HepG2 (cell line): ENCODE measurements at regions of chr13 and their contacts with region 1.

Region 1: GRCh38 chr13:41652727-41653361 is 195.5 kb downstream of the RGCC start:
- DNase-seq: peak; percentile 62
- ATAC-seq: no peak
- H3K4me3 ChIP-seq: no peak overlapping the region
- H3K27ac ChIP-seq: no peak overlapping the region
- H3K4me1 ChIP-seq: peaks cover 46% of the 10 kb centered on the region
- H3K27me3 ChIP-seq: no peaks in the 10 kb centered on the region
- CTCF ChIP-seq: peak; percentile 69
- EP300 ChIP-seq: no peak
- POLR2A ChIP-seq: no peak
- RAD21 ChIP-seq: peak; percentile 73

Region 2: GRCh38 chr13:41075034-41075433 is 577.8 kb before region 1 on chr13:
- CTCF ChIA-PET with region 1: no interaction called
- POLR2A ChIA-PET with region 1: no interaction called
- in situ Hi-C with region 1: no loop called
- intact Hi-C with region 1: loop called (anchors 2 kb)
- DNase-seq: no peak
- ATAC-seq: no peak
- H3K4me3 ChIP-seq: no peak overlapping the region
- H3K27ac ChIP-seq: no peak overlapping the region
- H3K4me1 ChIP-seq: no peaks in the 10 kb centered on the region
- H3K27me3 ChIP-seq: no peaks in the 10 kb centered on the region
- CTCF ChIP-seq: peak; percentile 53
- EP300 ChIP-seq: no peak
- POLR2A ChIP-seq: no peak
- RAD21 ChIP-seq: 0 out of 2 replicates have a peak, but pooled peaks have one; percentile 36

Region 3: DNA sequence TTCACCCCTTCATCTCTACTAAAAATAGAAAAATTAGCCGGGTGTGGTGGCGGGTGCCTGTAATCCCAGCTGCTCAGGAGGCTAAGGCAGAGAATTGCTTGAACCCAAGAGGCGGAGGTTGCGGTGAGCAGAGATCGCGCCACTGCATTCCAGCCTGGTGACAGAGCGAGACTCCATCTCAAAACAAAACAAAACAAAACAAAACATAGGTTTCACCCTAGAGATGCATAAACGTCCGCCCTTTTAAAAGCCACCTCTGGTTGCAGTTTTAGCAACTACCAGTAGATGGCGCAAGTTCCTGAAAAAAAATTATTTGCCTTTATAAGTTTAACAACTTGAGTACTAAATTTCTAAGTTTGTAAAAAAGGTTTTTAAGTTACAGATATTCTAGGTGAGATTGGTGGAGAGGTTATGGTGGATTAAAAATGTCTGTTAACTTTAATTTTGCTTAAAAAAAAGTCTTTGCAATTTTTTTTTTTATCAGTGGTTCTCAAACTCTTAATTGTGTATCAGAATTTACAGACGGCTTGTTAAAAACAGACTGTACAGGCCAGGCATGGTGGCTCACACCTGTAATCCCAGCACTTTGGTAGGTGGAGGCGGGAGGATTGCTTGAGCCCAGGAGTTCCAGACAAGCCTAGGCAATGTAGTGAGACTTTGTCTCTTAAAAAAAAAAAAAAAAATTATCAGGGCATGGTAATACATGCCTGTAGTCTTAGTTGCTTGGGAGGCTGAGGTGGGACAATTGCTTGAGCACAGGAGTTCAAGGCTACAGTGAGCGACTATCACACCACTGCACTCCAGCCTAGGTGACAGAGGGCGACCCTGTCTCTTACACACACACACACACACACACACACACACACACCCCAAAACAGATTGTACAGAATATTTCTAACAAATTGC is 299.7 kb before region 1 on chr13:
- CTCF ChIA-PET with region 1: interaction called, 10 read pairs
- POLR2A ChIA-PET with region 1: no interaction called
- in situ Hi-C with region 1: no loop called
- intact Hi-C with region 1: loop called (anchors 1 kb)
- DNase-seq: peak; percentile 35
- ATAC-seq: peak; percentile 65
- H3K4me3 ChIP-seq: no peak overlapping the region
- H3K27ac ChIP-seq: no peak overlapping the region
- H3K4me1 ChIP-seq: peaks cover 20% of the 10 kb centered on the region
- H3K27me3 ChIP-seq: no peaks in the 10 kb centered on the region
- CTCF ChIP-seq: peak; percentile 56
- EP300 ChIP-seq: no peak
- POLR2A ChIP-seq: no peak
- RAD21 ChIP-seq: no peak

Region 4: DNA sequence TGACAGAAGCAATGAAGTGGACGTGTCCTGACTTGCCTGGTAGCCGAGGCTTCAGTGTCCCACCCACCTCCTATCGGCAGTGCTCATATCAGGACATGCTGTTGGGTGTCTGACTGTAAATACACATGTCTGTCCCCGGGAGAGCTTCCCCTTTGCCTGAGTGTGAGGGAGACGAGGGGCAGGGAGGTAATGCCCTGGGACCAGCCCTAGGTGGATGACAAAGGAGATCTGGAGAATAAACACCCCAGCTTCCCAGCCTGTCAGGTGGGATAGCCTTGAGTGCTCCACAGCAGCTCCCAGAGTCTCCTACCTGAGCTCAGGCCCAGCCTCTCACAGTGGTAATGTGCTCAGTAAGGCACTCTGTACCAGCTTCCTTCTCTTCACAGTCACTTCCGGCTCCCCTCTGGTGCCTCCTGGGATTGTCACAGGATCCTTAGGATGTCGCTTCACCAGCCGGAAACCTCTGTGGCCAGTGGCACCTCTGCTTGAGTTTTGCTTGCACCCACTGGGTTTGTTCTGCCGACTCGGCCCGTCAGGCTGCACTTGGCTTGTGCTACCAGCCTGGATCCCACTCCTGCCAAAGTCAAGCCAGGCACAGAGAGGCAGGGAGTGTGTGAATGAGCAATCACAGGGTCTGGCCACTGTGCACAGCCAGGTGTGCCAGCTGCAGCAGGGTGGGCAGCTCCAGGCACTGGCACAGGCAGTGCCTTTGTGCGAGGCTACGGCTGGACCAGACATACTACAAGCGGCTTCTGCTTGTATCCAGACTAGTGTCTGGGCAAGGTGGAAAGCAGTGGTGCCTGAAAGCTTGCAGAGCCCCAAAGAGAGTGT is 249.9 kb before region 1 on chr13:
- CTCF ChIA-PET with region 1: no interaction called
- POLR2A ChIA-PET with region 1: interaction called, 14 read pairs
- in situ Hi-C with region 1: no loop called
- intact Hi-C with region 1: no loop called
- DNase-seq: peak; percentile 29
- ATAC-seq: peak; percentile 96
- H3K4me3 ChIP-seq: peak overlapping the region; percentile 11 to 58 (median 49); a peak in 5 of 6 replicates
- H3K27ac ChIP-seq: no peak overlapping the region
- H3K4me1 ChIP-seq: peaks cover 19% of the 10 kb centered on the region; the same call in 1 of the 2 replicates
- H3K27me3 ChIP-seq: no peaks in the 10 kb centered on the region
- CTCF ChIP-seq: no peak
- EP300 ChIP-seq: no peak
- POLR2A ChIP-seq: no peak
- RAD21 ChIP-seq: no peak

Region 5: GRCh38 chr13:41456768-41457588 is 195.9 kb before region 1 on chr13 and contains the start of gene RGCC:
- CTCF ChIA-PET with region 1: interaction called, 3 read pairs
- POLR2A ChIA-PET with region 1: no interaction called
- in situ Hi-C with region 1: no loop called
- intact Hi-C with region 1: loop called (anchors 2 kb)
- DNase-seq: peak; percentile 30
- ATAC-seq: peak; percentile 92
- H3K4me3 ChIP-seq: peak within 1 kb of the TSS; percentile 45 to 75 (median 57); a peak in 4 of 6 replicates
- H3K27ac ChIP-seq: no peak within 1 kb of the TSS
- H3K4me1 ChIP-seq: peaks cover 18% of the 10 kb centered on the region
- H3K27me3 ChIP-seq: peaks cover 0 to 24% of the 10 kb centered on the region in 2 experiments; a peak in 2 of 5 replicates
- CTCF ChIP-seq: no peak
- EP300 ChIP-seq: no peak
- POLR2A ChIP-seq: no peak
- RAD21 ChIP-seq: no peak
- total RNA-seq, gene RGCC: 0.20 and 0.29 TPM in 2 replicates

Region 6: DNA sequence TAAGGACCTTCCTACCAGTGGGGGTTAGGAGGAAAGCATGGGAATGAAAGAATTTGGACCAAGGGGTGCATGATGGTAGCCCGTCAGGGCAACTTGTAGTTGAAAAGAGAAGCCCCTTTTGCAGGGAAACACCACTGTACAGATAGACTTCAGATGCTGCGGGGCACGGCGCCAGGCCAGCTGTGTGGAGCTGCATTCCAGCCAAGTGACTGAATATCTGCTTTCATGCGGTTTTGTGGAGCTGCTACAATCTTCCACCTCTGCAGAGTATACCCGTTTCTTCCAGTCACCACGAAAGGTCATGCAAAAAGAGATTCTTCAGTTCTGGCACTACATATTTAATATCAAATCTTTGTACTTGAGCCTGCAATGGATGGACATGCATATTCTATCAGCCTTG is 90.8 kb before region 1 on chr13:
- CTCF ChIA-PET with region 1: no interaction called
- POLR2A ChIA-PET with region 1: interaction called, 6 read pairs
- in situ Hi-C with region 1: no loop called
- intact Hi-C with region 1: loop called (anchors 5 kb)
- DNase-seq: no peak
- ATAC-seq: no peak
- H3K4me3 ChIP-seq: no peak overlapping the region
- H3K27ac ChIP-seq: no peak overlapping the region
- H3K4me1 ChIP-seq: peaks cover 50% of the 10 kb centered on the region
- H3K27me3 ChIP-seq: no peaks in the 10 kb centered on the region
- CTCF ChIP-seq: no peak
- EP300 ChIP-seq: no peak
- POLR2A ChIP-seq: no peak
- RAD21 ChIP-seq: no peak

Region 7: GRCh38 chr13:41608839-41609177 is 44.0 kb before region 1 on chr13:
- CTCF ChIA-PET with region 1: no interaction called
- POLR2A ChIA-PET with region 1: interaction called, 46 read pairs
- in situ Hi-C with region 1: loop called (anchors 5 kb)
- intact Hi-C with region 1: loop called (anchors 1 kb)
- DNase-seq: no peak
- ATAC-seq: no peak
- H3K4me3 ChIP-seq: no peak overlapping the region
- H3K27ac ChIP-seq: no peak overlapping the region
- H3K4me1 ChIP-seq: peaks cover 54% of the 10 kb centered on the region
- H3K27me3 ChIP-seq: no peaks in the 10 kb centered on the region
- CTCF ChIP-seq: no peak
- EP300 ChIP-seq: no peak
- POLR2A ChIP-seq: no peak
- RAD21 ChIP-seq: no peak